AG04450 (cell line): ENCODE measurements at regions of chr4 and their contacts with region 1.

Region 1: DNA sequence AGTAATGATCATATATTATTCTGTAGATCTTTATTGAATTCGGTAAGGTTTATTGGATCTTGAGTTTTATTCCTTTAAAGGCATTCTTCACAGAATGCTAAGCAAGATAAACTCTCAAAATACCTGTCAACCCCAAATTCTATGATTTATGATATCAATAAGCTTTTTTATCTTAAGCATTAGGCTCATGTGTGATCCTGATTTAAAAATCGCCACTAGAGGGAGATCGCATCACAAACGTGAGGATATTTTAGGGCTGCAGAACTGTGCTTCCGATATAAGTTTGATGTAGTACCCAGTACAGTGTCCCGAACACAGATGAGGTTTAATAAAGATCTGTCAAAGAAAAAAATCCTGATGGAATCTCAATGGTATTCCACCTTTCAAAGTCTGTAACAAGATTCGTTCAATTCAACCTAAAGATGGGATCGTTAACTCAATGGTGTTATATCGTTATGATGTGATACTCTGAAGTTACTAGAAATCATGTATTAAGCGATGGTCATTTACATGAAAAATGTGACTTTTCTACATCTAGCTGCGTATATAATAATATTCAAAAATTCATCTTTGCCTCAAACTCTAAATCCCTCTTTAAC is 169.0 kb downstream of the CORIN start:
- DNase-seq: peak; percentile 16
- H3K4me3 ChIP-seq: no peak overlapping the region
- H3K27ac ChIP-seq: no peak overlapping the region
- H3K27me3 ChIP-seq: no peaks in the 10 kb centered on the region
- CTCF ChIP-seq: peak; percentile 79

Region 2: DNA sequence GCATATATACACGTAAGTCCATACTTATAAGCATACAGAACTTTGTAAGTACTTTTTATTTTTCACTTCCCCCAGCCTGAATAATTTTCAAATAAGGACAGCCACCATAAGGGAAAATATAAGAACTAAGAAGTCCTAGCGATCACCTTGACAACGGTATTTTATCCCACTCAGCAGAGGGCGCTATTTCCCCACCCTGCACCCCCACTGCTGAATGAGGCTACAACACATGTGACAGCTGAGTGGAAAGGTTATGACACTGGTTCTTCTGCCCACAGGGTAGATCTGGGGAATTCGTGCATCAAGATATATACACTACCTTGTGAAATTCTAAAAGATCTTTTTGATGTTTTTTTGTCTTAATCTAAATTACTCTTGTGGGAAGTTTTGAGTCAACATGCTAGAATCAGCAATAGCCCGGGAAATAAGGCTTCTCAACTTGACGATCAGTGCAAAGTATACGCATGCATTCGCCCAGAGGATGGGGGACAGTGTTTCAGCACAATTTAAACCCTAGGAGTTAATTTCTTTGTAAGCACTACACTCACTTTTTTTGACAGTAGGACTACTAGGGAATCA is 17.5 kb after region 1 on chr4:
- CTCF ChIA-PET with region 1: interaction called, 14 read pairs
- POLR2A ChIA-PET with region 1: no interaction called
- DNase-seq: no peak
- H3K4me3 ChIP-seq: no peak overlapping the region
- H3K27ac ChIP-seq: no peak overlapping the region
- H3K27me3 ChIP-seq: no peaks in the 10 kb centered on the region
- CTCF ChIP-seq: peak; percentile 78